ENCODE measurements at regions of chr5 and their contacts with region 1.

Region 1: DNA sequence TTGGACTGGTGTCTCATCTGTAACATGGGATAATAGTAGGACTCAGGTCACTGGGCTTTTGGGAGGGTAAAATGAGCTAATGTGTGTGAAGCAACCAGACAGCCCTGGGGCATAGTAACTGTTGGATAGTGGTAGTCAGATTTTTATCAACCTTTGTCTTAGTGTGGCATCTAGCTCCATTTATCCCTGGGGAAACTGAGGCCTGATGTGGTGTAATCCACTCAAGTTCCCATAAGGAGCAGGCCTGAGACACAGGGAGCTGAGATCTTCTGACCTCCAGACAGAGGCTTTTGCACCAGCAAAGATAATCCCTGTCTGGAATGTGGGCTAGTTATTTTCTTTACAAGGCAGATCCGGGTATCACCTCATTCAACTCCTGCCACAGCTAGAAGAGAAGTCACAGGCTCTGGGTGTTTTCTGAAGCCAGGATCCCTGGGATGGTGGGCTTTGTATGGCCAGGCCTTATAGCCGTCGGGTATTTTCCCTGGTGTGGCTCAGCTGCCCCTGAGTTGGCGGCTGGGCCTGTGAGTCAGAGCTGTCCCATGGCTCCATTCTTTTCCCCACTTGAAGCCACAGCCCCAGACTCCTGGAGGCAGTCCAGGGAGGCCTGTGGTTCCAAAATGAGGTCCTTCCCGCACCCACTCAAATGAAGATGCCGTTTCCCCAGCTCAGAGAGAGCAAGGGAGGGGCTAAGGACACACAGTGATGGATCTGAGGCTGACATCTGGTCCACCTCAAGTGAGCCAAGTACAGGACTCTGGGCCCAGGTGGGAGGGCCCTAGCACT is 26.1 kb upstream of the CSF1R start:
- DNase-seq: peak; percentile 31 to 49
- H3K4me3 ChIP-seq: no peak overlapping the region
- H3K4me3 Mint-ChIP-seq: peak overlapping the region; percentile 7
- H3K27ac Mint-ChIP-seq: peak overlapping the region; percentile 92
- H3K4me1 ChIP-seq: peaks cover 56% of the 10 kb centered on the region
- H3K4me1 Mint-ChIP-seq: peaks cover 51% of the 10 kb centered on the region
- H3K27me3 ChIP-seq: no peaks in the 10 kb centered on the region
- H3K27me3 Mint-ChIP-seq: no peaks in the 10 kb centered on the region
- CTCF ChIP-seq: no peak

Region 2: DNA sequence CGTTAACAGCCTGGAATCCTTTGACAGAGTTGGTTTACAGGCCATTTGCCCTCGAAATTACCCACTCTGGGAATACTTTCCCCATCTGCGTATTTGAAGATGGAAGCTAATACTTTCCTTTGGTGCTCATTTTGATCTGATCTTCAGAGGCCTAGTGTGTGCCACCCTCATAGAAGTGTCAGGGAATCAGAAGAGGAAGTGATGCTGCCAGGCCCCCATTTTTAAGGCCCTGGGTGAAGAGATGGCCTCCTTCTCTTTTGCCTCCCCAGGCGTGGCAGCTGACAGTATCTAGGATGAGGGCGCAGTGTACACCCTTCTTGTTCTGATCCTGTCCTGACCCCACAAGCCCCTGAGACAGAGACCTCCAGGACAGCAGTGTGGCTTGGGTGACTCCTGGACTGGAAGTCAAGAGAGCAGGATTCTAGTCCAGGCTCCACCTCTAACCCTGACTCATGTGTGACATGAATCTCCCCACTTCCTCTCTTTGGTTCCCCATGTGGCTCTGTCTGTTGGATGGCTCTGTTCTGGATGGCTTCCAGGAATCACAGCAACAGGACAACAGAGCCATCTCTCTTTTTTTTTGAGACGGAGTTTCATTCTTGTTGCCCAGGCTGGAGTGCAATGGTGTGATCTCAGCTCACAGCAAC is 53.9 kb before region 1 on chr5:
- CTCF ChIA-PET with region 1: no interaction called
- POLR2A ChIA-PET with region 1: no interaction called
- intact Hi-C with region 1: loop called (anchors 5 kb)
- DNase-seq: no peak
- H3K4me3 ChIP-seq: no peak overlapping the region
- H3K4me3 Mint-ChIP-seq: no peak overlapping the region
- H3K27ac Mint-ChIP-seq: no peak overlapping the region
- H3K4me1 ChIP-seq: peaks cover 6% of the 10 kb centered on the region; the same call in 1 of the 2 replicates
- H3K4me1 Mint-ChIP-seq: peaks cover 6% of the 10 kb centered on the region
- H3K27me3 ChIP-seq: no peaks in the 10 kb centered on the region
- H3K27me3 Mint-ChIP-seq: no peaks in the 10 kb centered on the region
- CTCF ChIP-seq: no peak

Region 3: DNA sequence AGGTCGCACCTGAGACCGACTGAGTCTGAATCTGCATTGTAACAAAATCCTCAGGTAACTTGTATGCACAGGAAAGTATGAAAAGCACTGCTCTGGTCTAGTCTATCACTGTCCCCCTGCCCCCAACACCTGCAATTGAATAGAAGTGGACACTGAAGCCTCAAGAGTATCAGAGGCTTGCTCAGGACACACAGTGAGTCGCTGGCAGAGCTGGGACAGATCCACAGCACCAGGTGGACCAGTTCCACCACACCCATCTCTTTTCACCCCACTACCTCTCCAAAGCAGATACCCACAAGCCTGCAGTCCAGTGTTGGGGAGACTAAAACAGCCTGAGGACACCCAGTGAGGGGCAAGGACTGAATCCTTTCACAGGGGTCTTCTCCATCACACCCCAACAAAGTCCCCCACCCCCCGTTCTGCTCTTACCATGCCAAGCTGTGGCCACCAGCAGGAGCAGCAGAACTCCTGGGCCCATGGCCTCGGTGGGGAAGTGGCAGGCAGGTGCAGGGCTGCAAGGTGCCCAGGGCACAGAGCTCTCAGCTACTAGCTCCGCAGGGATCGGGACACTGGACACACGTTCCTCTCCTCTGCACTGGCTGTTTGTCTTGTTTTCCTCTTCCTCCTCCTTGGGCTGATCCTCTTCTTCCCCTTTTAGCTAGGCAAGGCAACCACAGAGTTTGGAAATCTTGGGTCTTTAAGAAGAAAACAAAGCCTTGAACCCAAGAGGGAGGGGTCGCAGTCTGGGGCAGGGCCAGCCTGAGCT is 26.3 kb before region 1 on chr5 and contains the start of gene CSF1R:
- CTCF ChIA-PET with region 1: no interaction called
- POLR2A ChIA-PET with region 1: no interaction called
- intact Hi-C with region 1: loop called (anchors 2 kb)
- DNase-seq: no peak
- H3K4me3 ChIP-seq: no peak within 1 kb of the TSS
- H3K4me3 Mint-ChIP-seq: no peak within 1 kb of the TSS
- H3K27ac Mint-ChIP-seq: no peak within 1 kb of the TSS
- H3K4me1 ChIP-seq: peaks cover 10% of the 10 kb centered on the region
- H3K4me1 Mint-ChIP-seq: peaks cover 17% of the 10 kb centered on the region
- H3K27me3 ChIP-seq: no peaks in the 10 kb centered on the region
- H3K27me3 Mint-ChIP-seq: no peaks in the 10 kb centered on the region
- CTCF ChIP-seq: no peak
- total RNA-seq, gene CSF1R: 5.8 and 8.2 TPM in 2 replicates